ENCODE measurements at regions of chr19 and their contacts with region 1.

Region 1: DNA sequence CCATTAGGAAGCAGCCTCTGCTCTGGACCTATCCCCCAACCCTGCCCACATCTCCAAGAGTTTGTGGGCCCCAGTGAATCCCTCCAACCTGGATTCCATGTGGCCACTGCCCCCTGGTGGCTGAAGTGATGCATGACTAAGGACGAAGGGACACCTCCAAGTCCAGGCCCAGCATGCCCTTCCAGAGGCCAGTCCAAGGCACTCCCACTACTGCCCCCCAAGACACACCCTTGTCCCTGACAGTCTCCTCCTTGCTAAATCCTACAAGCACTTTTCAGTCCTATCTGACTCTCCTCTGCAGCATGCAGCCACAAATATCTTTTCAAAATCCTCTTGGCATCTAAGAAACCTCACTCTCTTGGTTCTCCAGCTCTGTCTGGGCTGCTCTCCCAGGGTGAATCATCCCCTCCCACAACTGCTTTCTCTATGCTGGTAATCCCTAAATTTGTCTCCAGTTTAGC is 33.0 kb downstream of the DEDD2 start:
- DNase-seq: peak; percentile 64 to 84
- ATAC-seq: peak; percentile 77 to 79 (median 79)
- H3K4me3 ChIP-seq: no peak overlapping the region
- H3K4me3 Mint-ChIP-seq: peak overlapping the region; percentile 72
- H3K27ac ChIP-seq: peak overlapping the region; percentile 17
- H3K27ac Mint-ChIP-seq: peak overlapping the region; percentile 45 to 75
- H3K4me1 ChIP-seq: peaks cover 32% of the 10 kb centered on the region
- H3K4me1 Mint-ChIP-seq: peaks cover 46 to 48% of the 10 kb centered on the region in 2 donors
- H3K27me3 ChIP-seq: peaks cover 3% of the 10 kb centered on the region
- H3K27me3 Mint-ChIP-seq: peaks cover 0 to 3% of the 10 kb centered on the region in 2 donors
- CTCF ChIP-seq: peak; percentile 87

Region 2: DNA sequence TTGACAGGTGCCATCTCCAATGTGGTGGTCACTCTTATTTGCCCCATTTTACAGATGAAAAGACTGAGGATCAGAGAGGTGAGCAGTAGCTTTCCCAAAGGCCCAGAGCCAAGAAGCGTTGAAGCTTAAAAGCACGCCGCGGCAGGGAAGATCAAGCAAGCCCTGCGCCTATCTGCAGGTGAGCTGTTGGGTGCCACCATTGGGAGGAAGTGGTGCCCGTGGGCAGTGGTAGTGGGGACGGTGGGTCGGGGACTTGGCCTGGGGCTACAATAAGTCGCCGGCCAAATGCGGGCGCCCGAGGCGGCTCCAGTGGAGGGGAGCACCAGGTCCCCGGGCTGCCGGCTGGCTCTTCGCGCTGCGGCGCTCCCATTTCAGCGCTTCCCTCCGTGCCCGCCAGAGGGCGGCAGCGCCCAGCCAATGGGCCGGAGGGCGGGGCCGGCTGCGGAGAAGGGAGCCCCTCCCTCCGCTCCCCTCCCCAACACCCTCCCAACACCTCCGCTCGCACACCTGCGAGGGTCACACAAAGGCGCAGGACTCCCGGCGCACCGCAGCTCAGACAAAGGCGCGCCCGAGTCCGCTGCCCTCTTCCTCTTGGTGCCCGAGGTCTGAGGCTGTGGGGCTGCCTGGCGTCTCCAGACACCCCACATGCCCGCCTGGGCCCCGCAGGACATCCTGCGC is 51.4 kb before region 1 on chr19:
- intact Hi-C with region 1: loop called (anchors 1 kb)
- DNase-seq: peak; percentile 83 to 92
- ATAC-seq: peak; percentile 74 to 86 (median 77)
- H3K4me3 ChIP-seq: peak overlapping the region; percentile 73
- H3K4me3 Mint-ChIP-seq: peak overlapping the region; percentile 80
- H3K27ac ChIP-seq: peak overlapping the region; percentile 49
- H3K27ac Mint-ChIP-seq: peak overlapping the region; percentile 58 to 86
- H3K4me1 ChIP-seq: peaks cover 73% of the 10 kb centered on the region
- H3K4me1 Mint-ChIP-seq: peaks cover 36 to 73% of the 10 kb centered on the region in 2 donors
- H3K27me3 ChIP-seq: no peaks in the 10 kb centered on the region
- H3K27me3 Mint-ChIP-seq: no peaks in the 10 kb centered on the region
- CTCF ChIP-seq: peak; percentile 100

Region 3: DNA sequence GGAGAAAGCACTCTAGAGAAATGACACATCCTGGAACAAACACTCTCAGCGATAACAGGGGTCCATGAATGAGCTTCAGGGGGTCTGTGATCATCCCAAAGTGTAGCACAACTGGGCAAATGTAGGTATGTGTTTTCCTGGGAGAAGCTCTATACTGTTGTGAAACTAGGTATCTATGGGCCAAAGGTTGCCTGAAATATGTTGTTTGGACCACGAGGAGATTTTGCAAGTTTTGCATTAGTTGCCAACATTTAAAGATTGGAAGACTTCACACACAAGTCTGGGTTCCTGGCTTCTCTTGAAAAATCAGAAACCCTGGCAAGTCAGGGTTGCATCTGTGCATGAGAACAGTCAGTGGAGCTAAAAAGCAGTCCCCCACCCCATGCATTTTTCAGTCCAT is 25.5 kb before region 1 on chr19:
- intact Hi-C with region 1: no loop called
- DNase-seq: no peak
- ATAC-seq: no peak
- H3K4me3 ChIP-seq: no peak overlapping the region
- H3K4me3 Mint-ChIP-seq: no peak overlapping the region
- H3K27ac ChIP-seq: no peak overlapping the region
- H3K27ac Mint-ChIP-seq: no peak overlapping the region
- H3K4me1 ChIP-seq: peaks cover 46% of the 10 kb centered on the region
- H3K4me1 Mint-ChIP-seq: peaks cover 73 to 82% of the 10 kb centered on the region in 2 donors
- H3K27me3 ChIP-seq: no peaks in the 10 kb centered on the region
- H3K27me3 Mint-ChIP-seq: peaks cover 25 to 37% of the 10 kb centered on the region in 2 donors
- CTCF ChIP-seq: no peak

Region 4: GRCh38 chr19:42172261-42172660 is 12.2 kb before region 1 on chr19:
- intact Hi-C with region 1: no loop called
- DNase-seq: no peak
- ATAC-seq: no peak
- H3K4me3 ChIP-seq: no peak overlapping the region
- H3K4me3 Mint-ChIP-seq: no peak overlapping the region
- H3K27ac ChIP-seq: no peak overlapping the region
- H3K27ac Mint-ChIP-seq: no peak overlapping the region
- H3K4me1 ChIP-seq: peaks cover 13% of the 10 kb centered on the region
- H3K4me1 Mint-ChIP-seq: peaks cover 7 to 20% of the 10 kb centered on the region in 2 donors
- H3K27me3 ChIP-seq: peaks cover 14% of the 10 kb centered on the region
- H3K27me3 Mint-ChIP-seq: peaks cover 7 to 12% of the 10 kb centered on the region in 2 donors
- CTCF ChIP-seq: no peak